Right lobe of liver (tissue), 6 donors: ENCODE measurements at regions of chr12 and their contacts with region 1.

Region 1: GRCh38 chr12:110600254-110600653 is 13.7 kb upstream of the TCTN1 start:
- DNase-seq: no peak
- ATAC-seq: peak; percentile 84 to 90 (median 86)
- H3K4me3 ChIP-seq: no peak overlapping the region
- H3K27ac ChIP-seq: peak overlapping the region in 1 of 3 donors; percentile 1
- H3K4me1 ChIP-seq: peaks cover 0 to 10% (median 0%) of the 10 kb centered on the region in 4 donors
- H3K27me3 ChIP-seq: no peaks in the 10 kb centered on the region
- CTCF ChIP-seq: peak; percentile 50 to 71 (median 53)
- POLR2A ChIP-seq: no peak

Region 2: DNA sequence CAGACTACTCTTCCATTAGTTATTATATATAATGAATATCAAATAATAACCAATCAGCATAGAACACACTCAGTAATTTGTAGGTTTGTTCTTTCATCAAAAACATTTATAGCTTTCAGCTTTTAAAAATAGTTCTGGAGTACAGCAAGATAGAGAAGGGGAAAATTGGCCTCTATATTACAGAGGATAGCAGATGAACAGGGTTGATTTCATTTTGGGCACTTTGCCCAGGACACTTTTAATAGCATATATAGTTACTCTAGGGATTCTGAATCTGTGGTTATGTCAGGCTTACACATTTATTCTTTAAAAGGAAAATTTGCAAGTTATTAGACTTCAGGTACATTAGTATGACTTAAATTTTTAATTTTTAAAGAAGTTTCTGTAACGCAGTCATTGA is 423.5 kb before region 1 on chr12:
- intact Hi-C with region 1: no loop called
- DNase-seq: no peak
- ATAC-seq: no peak
- H3K4me3 ChIP-seq: no peak overlapping the region
- H3K27ac ChIP-seq: no peak overlapping the region
- H3K4me1 ChIP-seq: no peaks in the 10 kb centered on the region
- H3K27me3 ChIP-seq: no peaks in the 10 kb centered on the region
- CTCF ChIP-seq: no peak
- POLR2A ChIP-seq: no peak

Region 3: DNA sequence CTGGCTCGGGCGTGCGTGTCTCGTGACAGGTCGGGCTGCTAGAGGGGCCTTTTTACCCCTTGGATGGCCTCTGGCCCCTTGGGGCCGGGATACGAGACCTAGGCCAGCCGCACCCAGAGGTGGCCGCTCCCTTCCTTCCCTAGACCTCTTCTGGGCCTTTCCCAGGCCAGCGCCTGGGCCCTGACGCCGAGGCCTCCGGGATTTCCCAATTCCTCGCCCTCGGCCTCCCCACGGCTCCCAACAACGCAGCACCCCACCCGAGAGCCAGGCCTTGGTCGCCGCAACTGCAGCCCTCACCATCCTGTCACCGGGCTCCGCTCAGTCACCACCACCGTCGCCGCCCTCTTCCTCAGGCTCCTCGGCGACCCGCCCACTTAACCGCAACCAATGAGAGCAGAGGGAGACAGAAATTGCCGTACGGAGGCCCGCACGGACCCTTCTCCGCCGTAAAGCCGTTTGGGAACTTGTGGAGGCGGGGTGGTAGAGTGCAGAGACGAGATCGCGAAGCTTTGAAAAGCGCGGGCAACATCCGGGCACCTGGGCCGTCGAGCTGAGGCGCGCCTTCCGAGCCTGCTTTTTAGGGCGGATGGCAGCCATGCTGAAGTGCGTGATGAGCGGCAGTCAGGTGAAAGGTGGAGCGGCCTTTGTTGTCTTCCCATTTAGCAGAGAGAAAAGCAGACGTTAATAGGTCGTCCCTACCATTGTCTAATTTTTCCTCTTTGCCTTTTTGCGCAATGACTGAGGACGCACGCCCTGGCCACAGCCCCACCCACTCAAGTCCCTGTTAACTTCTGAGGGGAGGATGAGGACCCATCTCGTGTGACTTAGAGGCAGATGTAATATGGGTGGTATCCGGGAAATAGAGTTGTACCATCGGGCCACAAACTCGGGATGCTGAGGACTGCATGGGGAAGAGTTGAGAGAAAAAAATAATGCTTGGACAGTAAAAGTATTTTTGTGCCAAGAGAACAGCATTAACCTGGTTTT is 98.2 kb before region 1 on chr12 and contains the starts of genes RAD9B and VPS29:
- intact Hi-C with region 1: loop called (anchors 5 to 10 kb)
- DNase-seq: peak; percentile 97 to 99 (median 98)
- ATAC-seq: peak; percentile 95 to 98 (median 96)
- H3K4me3 ChIP-seq: peak within 1 kb of the TSS; percentile 83 to 97 (median 95)
- H3K27ac ChIP-seq: peak within 1 kb of the TSS; percentile 78 to 80 (median 79)
- H3K4me1 ChIP-seq: peaks cover 0 to 28% (median 12%) of the 10 kb centered on the region in 4 donors
- H3K27me3 ChIP-seq: no peaks in the 10 kb centered on the region
- CTCF ChIP-seq: no peak
- POLR2A ChIP-seq: peak; percentile 96
- total RNA-seq, gene RAD9B: 0.37 to 0.58 (median 0.51) TPM in 5 of 6 experiments, not detected in the other
- total RNA-seq, gene VPS29: 37.9 to 61.2 (median 51.1) TPM

Region 4: DNA sequence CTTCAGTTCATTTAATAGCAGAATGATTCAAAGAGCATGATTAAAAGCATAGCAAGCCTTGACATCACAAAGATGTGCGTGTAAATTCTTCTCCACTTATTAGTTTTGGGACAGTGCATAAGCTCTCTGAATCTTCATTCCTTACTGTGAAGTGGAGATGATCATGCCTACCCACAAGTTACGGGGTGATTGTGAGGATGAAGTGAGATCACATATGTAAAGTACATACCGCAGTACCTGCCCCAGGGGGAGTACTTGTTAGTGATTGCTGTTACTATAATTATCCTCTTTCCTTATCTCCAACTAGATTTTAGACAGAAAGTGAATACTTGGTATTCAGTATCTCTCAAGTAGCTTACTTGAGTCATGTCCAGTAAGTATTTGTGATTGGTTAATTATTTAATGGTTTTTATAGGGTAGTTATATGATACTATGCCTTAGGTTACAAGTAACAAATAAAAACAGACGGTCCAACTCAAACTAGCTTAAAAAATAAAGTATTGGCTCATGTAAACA is 92.1 kb before region 1 on chr12:
- intact Hi-C with region 1: loop called (anchors 5 to 10 kb)
- DNase-seq: no peak
- ATAC-seq: no peak
- H3K4me3 ChIP-seq: no peak overlapping the region
- H3K27ac ChIP-seq: no peak overlapping the region
- H3K4me1 ChIP-seq: no peaks in the 10 kb centered on the region
- H3K27me3 ChIP-seq: no peaks in the 10 kb centered on the region
- CTCF ChIP-seq: no peak
- POLR2A ChIP-seq: no peak

Region 5: DNA sequence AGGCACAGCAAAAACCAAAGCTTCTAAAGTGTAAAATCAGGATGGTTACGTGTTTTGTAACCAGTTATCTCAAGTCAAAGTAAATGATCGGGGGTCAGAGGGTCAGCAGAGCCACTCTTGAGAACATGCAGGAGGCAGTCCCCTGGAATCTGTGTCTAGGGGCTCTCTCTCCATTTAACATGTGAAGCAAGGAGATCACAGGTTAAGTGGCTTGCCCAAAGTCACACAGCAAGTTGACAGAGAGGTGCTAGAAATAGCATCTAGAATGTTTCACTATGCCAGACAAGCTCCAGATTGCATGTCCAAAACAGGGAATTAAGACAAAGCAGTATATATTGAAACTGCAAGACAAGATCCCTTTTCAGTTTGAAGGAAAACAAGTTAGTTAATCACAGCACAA is 50.5 kb before region 1 on chr12:
- intact Hi-C with region 1: loop called in 1 of 2 experiments (anchors 5 kb)
- DNase-seq: no peak
- ATAC-seq: no peak
- H3K4me3 ChIP-seq: no peak overlapping the region
- H3K27ac ChIP-seq: peak overlapping the region in 2 of 3 donors; percentile 11 to 80
- H3K4me1 ChIP-seq: peaks cover 0 to 43% (median 18%) of the 10 kb centered on the region in 4 donors
- H3K27me3 ChIP-seq: no peaks in the 10 kb centered on the region
- CTCF ChIP-seq: no peak
- POLR2A ChIP-seq: no peak